H1 (cell line): ENCODE measurements at regions of chr15 and their contacts with region 1.

Region 1: DNA sequence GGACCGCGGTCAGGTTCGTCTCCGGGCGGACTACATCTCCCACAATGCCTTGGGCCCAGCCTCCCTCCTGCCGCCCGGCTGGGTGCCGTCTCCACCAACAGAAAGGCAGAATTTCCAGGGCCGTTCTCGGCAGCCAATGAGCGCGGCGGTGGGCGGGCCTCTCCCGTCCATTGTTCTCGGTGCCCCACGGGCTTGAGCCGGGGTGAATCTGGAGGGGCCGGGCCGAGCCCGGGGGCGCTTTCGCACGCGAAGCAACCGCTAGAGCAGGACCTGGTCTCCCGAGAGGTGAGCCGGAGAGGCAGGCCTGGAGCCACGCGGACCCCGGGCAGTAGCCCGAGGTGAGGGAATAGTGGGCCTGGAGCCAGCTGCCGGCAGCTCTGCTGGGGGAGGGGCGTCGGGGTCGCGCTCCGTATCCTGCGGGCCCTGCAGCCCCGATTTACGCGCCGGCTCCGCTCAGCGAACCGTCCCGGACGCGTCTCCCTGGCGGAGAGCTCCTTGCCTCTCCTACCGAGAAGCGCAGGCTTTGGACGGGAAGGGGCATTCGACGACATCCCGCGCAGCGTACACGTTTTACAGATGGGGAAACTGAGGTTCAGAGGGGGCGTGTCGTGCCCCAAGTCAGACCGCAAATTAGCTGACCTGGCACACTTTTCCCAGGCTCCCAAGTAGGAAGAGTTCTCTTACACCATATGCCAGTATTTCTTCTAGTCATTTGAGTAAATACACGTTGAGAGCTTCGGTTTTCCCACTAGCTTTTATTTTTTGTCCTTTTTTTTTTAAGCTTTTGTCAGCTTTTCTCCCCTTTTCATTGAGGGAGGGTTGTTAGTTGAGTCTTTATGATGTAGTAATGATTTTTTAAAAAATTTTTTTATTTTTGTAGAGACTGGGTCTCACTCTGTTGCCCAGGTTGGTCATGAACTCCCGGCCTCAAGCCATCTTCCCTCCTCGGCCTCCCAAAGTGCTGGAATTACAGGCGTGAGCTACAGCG is at the start of gene ZSCAN2:
- DNase-seq: peak; percentile 89 to 98
- H3K4me3 ChIP-seq: peak within 1 kb of the TSS; percentile 56 to 90 (median 86)
- H3K27ac ChIP-seq: peak within 1 kb of the TSS; percentile 67; the same call in 1 of the 2 replicates
- H3K4me1 ChIP-seq: peaks cover 7 to 24% (median 15%) of the 10 kb centered on the region in 4 experiments
- H3K27me3 ChIP-seq: peaks cover 0 to 3% (median 0%) of the 10 kb centered on the region in 4 experiments; a peak in 4 of 7 replicates
- CTCF ChIP-seq: no peak
- EP300 ChIP-seq: no peak; a peak in 1 of 3 replicates
- POLR2A ChIP-seq: peak in 1 of 2 experiments; percentile 70; a peak in 2 of 3 replicates
- RAD21 ChIP-seq: no peak
- total RNA-seq, gene ZSCAN2: 37.3 and 52.4 TPM in 2 replicates

Region 2: GRCh38 chr15:84588053-84588874 is 12.9 kb before region 1 on chr15:
- CTCF ChIA-PET with region 1: interaction called, 46 read pairs
- POLR2A ChIA-PET with region 1: interaction called, 3 read pairs
- DNase-seq: peak; percentile 70 to 94
- H3K4me3 ChIP-seq: peak overlapping the region in 2 of 4 experiments; percentile 10 to 46; a peak in 4 of 8 replicates
- H3K27ac ChIP-seq: no peak overlapping the region
- H3K4me1 ChIP-seq: peaks cover 0 to 11% (median 0%) of the 10 kb centered on the region in 4 experiments; a peak in 2 of 7 replicates
- H3K27me3 ChIP-seq: no peaks in the 10 kb centered on the region
- CTCF ChIP-seq: peak; percentile 67 to 87 (median 82)
- EP300 ChIP-seq: no peak
- POLR2A ChIP-seq: no peak
- RAD21 ChIP-seq: peak; percentile 86 to 87

Region 3: DNA sequence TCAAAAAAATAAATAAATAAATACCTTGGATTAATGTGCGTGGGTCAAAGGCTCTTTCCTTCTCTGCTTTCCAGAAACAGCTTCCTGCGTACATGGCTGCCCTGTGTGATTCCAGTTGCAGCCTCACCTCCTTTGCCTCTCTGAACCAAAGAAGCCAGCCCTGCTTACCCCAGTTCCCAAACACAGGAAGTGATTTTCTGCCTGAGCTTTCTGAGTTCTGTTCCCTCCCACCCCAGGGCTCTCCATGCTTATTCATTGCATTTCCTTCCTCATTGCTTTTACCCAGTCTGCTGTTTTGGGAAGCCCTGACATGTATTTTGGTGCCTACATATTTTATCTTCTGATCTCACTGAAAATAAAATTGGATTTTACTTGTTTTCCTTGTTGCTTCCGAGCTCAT is 15.1 kb after region 1 on chr15:
- CTCF ChIA-PET with region 1: interaction called, 51 read pairs
- POLR2A ChIA-PET with region 1: interaction called, 176 read pairs
- DNase-seq: no peak
- H3K4me3 ChIP-seq: no peak overlapping the region
- H3K27ac ChIP-seq: no peak overlapping the region
- H3K4me1 ChIP-seq: peaks cover 0 to 2% (median 0%) of the 10 kb centered on the region in 4 experiments; a peak in 1 of 7 replicates
- H3K27me3 ChIP-seq: no peaks in the 10 kb centered on the region
- CTCF ChIP-seq: no peak
- EP300 ChIP-seq: no peak
- POLR2A ChIP-seq: no peak
- RAD21 ChIP-seq: no peak

Region 4: DNA sequence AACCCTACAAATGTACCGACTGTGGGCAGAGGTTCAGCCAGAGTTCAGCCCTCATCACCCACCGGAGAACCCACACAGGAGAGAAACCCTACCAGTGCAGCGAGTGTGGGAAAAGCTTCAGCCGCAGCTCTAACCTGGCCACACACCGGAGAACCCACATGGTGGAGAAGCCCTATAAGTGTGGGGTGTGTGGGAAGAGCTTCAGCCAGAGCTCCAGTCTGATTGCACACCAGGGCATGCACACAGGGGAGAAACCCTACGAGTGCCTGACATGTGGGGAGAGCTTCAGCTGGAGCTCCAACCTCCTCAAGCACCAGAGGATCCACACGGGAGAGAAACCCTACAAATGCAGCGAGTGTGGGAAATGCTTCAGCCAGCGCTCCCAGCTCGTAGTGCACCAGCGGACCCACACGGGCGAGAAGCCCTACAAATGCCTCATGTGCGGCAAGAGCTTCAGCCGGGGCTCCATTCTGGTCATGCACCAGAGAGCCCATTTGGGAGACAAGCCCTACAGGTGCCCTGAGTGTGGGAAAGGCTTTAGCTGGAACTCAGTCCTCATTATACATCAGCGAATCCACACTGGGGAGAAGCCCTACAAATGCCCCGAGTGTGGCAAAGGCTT is 20.3 kb after region 1 on chr15:
- CTCF ChIA-PET with region 1: interaction called, 51 read pairs
- POLR2A ChIA-PET with region 1: interaction called, 176 read pairs
- DNase-seq: no peak
- H3K4me3 ChIP-seq: peak overlapping the region in 1 of 4 experiments; percentile 2; a peak in 2 of 8 replicates
- H3K27ac ChIP-seq: no peak overlapping the region
- H3K4me1 ChIP-seq: no peaks in the 10 kb centered on the region
- H3K27me3 ChIP-seq: no peaks in the 10 kb centered on the region; a peak in 1 of 7 replicates
- CTCF ChIP-seq: no peak
- EP300 ChIP-seq: no peak
- POLR2A ChIP-seq: no peak
- RAD21 ChIP-seq: no peak

Region 5: GRCh38 chr15:84648539-84648938 is 47.4 kb after region 1 on chr15:
- CTCF ChIA-PET with region 1: interaction called, 50 read pairs
- POLR2A ChIA-PET with region 1: interaction called, 14 read pairs
- DNase-seq: no peak
- H3K4me3 ChIP-seq: no peak overlapping the region
- H3K27ac ChIP-seq: no peak overlapping the region
- H3K4me1 ChIP-seq: peaks cover 0 to 6% (median under 1%) of the 10 kb centered on the region in 4 experiments; a peak in 3 of 7 replicates
- H3K27me3 ChIP-seq: no peaks in the 10 kb centered on the region
- CTCF ChIP-seq: no peak
- EP300 ChIP-seq: no peak
- POLR2A ChIP-seq: no peak
- RAD21 ChIP-seq: no peak

Region 6: GRCh38 chr15:84766446-84767035 is 165.4 kb after region 1 on chr15:
- CTCF ChIA-PET with region 1: no interaction called
- POLR2A ChIA-PET with region 1: no interaction called
- DNase-seq: no peak
- H3K4me3 ChIP-seq: no peak overlapping the region
- H3K27ac ChIP-seq: no peak overlapping the region
- H3K4me1 ChIP-seq: no peaks in the 10 kb centered on the region
- H3K27me3 ChIP-seq: no peaks in the 10 kb centered on the region
- CTCF ChIP-seq: no peak
- EP300 ChIP-seq: no peak
- POLR2A ChIP-seq: no peak
- RAD21 ChIP-seq: no peak